Head of caudate nucleus (tissue), 42 donors: ENCODE measurements at regions of chr3 and their contacts with region 1.

Region 1: DNA sequence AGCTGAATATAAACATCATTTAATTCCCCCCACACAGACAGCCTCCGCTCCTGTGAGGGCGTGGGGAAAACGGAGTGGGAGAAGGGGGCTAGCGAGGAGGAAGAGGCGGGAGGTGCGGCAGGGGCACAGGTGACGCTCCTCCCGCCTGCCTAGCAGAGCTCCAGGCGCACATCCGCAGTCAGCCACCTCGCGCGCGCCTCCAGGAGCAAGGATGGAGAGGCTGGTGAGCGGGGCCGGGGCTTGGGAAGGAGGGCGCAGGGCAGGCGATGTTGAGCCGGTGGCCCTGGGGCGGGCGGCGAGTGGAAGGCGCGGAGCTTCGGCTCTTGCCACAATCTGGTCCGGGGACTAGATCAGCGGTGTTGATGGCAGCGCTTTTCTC is at the start of gene CD200:
- DNase-seq: peak; percentile 65 to 93 (median 83)

Region 2: GRCh38 chr3:111831840-111832239 is 501.2 kb before region 1 on chr3:
- intact Hi-C with region 1: no loop called
- DNase-seq: no peak

Region 3: GRCh38 chr3:112390783-112391641 is 58.0 kb after region 1 on chr3:
- intact Hi-C with region 1: loop called (anchors 2 kb)
- DNase-seq: peak in 35 of 42 donors; percentile 13 to 85 (median 54)